GM12878 (cell line): ENCODE measurements at regions of chr1 and their contacts with region 1.

Region 1: GRCh38 chr1:159161001-159161718 is 10.3 kb upstream of the CADM3 start:
- DNase-seq: peak; percentile 51
- ATAC-seq: peak; percentile 99
- H3K4me3 ChIP-seq: no peak overlapping the region
- H3K27ac ChIP-seq: no peak overlapping the region
- H3K4me1 ChIP-seq: peaks cover 3% of the 10 kb centered on the region; the same call in 1 of the 2 replicates
- H3K27me3 ChIP-seq: peaks cover 0 to 2% of the 10 kb centered on the region in 2 experiments; a peak in 1 of 4 replicates
- CTCF ChIP-seq: peak; percentile 94 to 100 (median 99); a peak in 5 of 6 replicates
- EP300 ChIP-seq: no peak
- POLR2A ChIP-seq: no peak
- RAD21 ChIP-seq: peak; percentile 100

Region 2: DNA sequence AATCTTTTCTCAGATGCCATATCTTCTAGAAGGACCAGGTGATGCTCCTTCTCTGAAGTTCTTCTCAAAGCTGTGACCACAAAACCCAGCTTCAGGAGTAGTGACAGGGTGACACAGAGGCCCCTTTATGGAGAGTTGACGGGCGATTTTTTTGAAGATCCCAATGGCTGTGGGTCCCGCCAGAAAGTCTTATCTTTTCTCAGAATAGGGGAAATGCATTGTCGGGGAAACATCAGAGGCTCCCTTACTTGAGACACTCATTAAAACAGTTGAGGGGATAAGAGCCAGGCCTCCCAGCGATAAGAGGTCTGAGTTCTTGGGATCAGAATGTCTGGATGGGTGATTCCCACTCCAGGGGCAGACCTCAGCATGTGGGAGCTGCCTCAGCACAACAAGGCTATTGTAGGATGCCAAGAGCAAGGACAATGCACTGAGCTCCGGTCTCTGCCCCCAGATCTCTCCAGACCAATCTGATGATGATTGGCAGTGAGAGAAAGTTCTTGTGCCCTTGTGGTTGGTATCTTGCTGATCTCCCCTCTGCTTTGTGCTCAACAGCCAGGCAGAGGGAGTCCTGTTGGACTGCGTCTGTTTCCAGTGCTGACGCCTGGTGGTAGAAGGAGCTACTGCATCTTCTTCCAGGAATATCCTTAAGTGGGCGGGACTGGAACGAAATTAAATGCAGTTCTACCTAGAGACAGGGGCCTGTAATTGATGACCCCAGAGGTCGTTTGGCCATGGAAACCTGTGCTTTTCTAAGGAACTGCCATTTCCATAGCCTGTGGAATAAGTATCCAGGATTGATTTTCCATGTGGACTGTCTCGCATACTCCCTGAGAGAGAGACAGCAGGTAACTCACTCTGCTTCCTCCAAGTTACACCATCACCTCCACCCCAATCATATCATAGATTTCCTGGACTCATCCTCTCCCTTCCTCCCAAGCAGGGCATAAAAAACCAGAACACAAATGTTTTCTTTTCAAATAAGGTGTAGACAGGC is 36.7 kb after region 1 on chr1:
- CTCF ChIA-PET with region 1: interaction called, 50 read pairs
- POLR2A ChIA-PET with region 1: no interaction called
- RAD21 ChIA-PET with region 1: interaction called, 4 read pairs
- SMC1A ChIA-PET with region 1: interaction called, 18 read pairs
- in situ Hi-C with region 1: loop called (anchors 5 kb)
- intact Hi-C with region 1: loop called (anchors 1 kb)
- DNase-seq: no peak
- ATAC-seq: peak; percentile 96
- H3K4me3 ChIP-seq: no peak overlapping the region
- H3K27ac ChIP-seq: no peak overlapping the region
- H3K4me1 ChIP-seq: no peaks in the 10 kb centered on the region
- H3K27me3 ChIP-seq: peaks cover 0 to 2% of the 10 kb centered on the region in 2 experiments; a peak in 2 of 4 replicates
- CTCF ChIP-seq: peak; percentile 83 to 90 (median 88)
- EP300 ChIP-seq: no peak
- POLR2A ChIP-seq: no peak
- RAD21 ChIP-seq: peak; percentile 65

Region 3: GRCh38 chr1:159207774-159208173 is 46.6 kb after region 1 on chr1:
- CTCF ChIA-PET with region 1: interaction called, 116 read pairs
- POLR2A ChIA-PET with region 1: no interaction called
- RAD21 ChIA-PET with region 1: interaction called, 8 read pairs
- SMC1A ChIA-PET with region 1: interaction called, 8 read pairs
- in situ Hi-C with region 1: no loop called
- intact Hi-C with region 1: loop called (anchors 1 kb)
- DNase-seq: no peak
- ATAC-seq: peak; percentile 21; the same call in 1 of the 3 replicates
- H3K4me3 ChIP-seq: peak overlapping the region; percentile 40; the same call in 1 of the 2 replicates
- H3K27ac ChIP-seq: peak overlapping the region; percentile 55
- H3K4me1 ChIP-seq: peaks cover 12% of the 10 kb centered on the region; the same call in 1 of the 2 replicates
- H3K27me3 ChIP-seq: 0 out of 4 replicates have a peak, but pooled peaks cover 0 to 2% of the 10 kb centered on the region in 2 experiments
- CTCF ChIP-seq: no peak
- EP300 ChIP-seq: no peak
- POLR2A ChIP-seq: no peak
- RAD21 ChIP-seq: no peak